ENCODE measurements at regions of chr13 and their contacts with region 1.

Region 1: DNA sequence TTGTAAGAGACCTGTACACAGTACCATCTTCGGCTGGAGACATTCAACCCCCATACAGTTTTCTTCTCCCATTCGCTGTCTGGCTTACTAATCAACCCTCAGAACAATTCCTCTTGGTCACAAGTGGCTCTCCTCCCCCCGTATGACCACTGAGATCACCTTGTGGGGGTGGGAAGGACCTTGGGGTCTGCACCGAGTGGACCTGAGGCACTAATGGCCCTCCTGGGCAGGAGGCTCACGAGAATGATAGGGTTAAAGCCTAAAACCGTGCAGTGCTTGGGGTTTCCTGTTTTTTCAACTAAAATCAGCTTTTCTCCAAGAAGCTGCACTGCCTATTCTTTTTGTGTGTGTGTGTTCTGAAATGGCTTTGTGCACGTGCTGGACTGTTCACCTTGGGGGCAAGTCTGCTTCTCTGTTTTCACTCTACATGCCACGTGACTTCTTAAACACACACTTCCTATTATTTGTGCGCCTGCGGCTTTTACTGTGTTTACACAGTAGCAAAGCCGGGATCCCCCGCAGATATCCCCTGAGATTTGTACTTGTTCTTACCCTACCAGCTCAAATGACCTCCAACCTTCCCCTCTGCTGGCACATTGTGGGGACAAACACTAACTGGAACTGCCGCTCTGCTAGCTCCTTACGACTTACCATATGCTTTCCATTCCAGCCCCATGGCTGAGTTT is 12.3 kb downstream of the RBM26 start:
- DNase-seq: peak; percentile 45
- H3K4me3 Mint-ChIP-seq: peak overlapping the region; percentile 50
- H3K27ac Mint-ChIP-seq: peak overlapping the region; percentile 60
- H3K4me1 Mint-ChIP-seq: peaks cover 64% of the 10 kb centered on the region
- H3K27me3 Mint-ChIP-seq: no peaks in the 10 kb centered on the region

Region 2: GRCh38 chr13:78137404-78138142 is 1256.1 kb before region 1 on chr13:
- CTCF ChIA-PET with region 1: no interaction called
- intact Hi-C with region 1: loop called (anchors 2 kb)
- DNase-seq: peak; percentile 8
- H3K4me3 Mint-ChIP-seq: peak overlapping the region; percentile 21
- H3K27ac Mint-ChIP-seq: no peak overlapping the region
- H3K4me1 Mint-ChIP-seq: peaks cover 6% of the 10 kb centered on the region
- H3K27me3 Mint-ChIP-seq: peaks cover 3% of the 10 kb centered on the region

Region 3: GRCh38 chr13:78934336-78934735 is 459.4 kb before region 1 on chr13:
- CTCF ChIA-PET with region 1: no interaction called
- intact Hi-C with region 1: no loop called
- DNase-seq: no peak
- H3K4me3 Mint-ChIP-seq: no peak overlapping the region
- H3K27ac Mint-ChIP-seq: no peak overlapping the region
- H3K4me1 Mint-ChIP-seq: no peaks in the 10 kb centered on the region
- H3K27me3 Mint-ChIP-seq: peaks cover 7% of the 10 kb centered on the region

Region 4: DNA sequence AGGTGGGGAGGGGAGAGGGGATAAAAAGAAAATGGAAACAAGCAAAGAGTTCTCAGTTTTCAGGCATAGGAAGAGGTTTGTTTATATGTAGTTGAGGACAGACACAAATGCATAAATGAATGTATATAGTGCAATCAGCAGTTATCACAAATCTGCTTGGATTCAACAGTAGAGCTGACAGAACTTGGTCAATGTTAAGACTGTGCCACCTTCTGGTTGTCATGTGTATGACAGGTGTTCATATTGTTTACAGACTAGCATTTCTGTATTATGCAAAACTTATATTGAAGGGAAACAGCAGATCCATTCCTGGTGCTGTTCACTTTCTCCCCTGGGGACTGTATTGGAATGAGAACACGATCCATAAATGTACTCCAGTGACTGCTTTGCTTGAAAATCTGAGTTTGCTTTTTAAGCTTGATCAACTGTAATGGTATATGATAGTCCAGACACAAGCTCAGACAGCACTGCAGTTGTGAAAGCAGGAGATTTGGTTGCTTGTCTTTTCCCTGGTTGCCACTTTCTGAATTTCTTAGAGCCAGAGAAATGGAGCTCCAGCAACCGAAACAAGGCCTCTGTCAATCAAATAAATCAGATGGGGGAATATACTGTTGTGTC is 415.2 kb before region 1 on chr13:
- CTCF ChIA-PET with region 1: no interaction called
- intact Hi-C with region 1: loop called (anchors 5 kb)
- DNase-seq: peak; percentile 63
- H3K4me3 Mint-ChIP-seq: no peak overlapping the region
- H3K27ac Mint-ChIP-seq: no peak overlapping the region
- H3K4me1 Mint-ChIP-seq: no peaks in the 10 kb centered on the region
- H3K27me3 Mint-ChIP-seq: peaks cover 10% of the 10 kb centered on the region

Region 5: GRCh38 chr13:79194272-79194671 is 199.4 kb before region 1 on chr13:
- CTCF ChIA-PET with region 1: no interaction called
- intact Hi-C with region 1: loop called (anchors 1 kb)
- DNase-seq: peak; percentile 76
- H3K4me3 Mint-ChIP-seq: no peak overlapping the region
- H3K27ac Mint-ChIP-seq: no peak overlapping the region
- H3K4me1 Mint-ChIP-seq: peaks cover 40% of the 10 kb centered on the region
- H3K27me3 Mint-ChIP-seq: no peaks in the 10 kb centered on the region

Region 6: GRCh38 chr13:79405829-79406596 is 12.3 kb after region 1 on chr13 and contains the start of gene RBM26:
- CTCF ChIA-PET with region 1: interaction called, 13 read pairs
- intact Hi-C with region 1: loop called (anchors 1 kb)
- DNase-seq: peak; percentile 96
- H3K4me3 Mint-ChIP-seq: peak within 1 kb of the TSS; percentile 91
- H3K27ac Mint-ChIP-seq: peak within 1 kb of the TSS; percentile 97
- H3K4me1 Mint-ChIP-seq: peaks cover 41% of the 10 kb centered on the region
- H3K27me3 Mint-ChIP-seq: no peaks in the 10 kb centered on the region
- total RNA-seq, gene RBM26: 44.4 to 44.7 TPM